Sigmoid colon (tissue), 7 donors: ENCODE measurements at regions of chr12 and their contacts with region 1.

Region 1: GRCh38 chr12:46516933-46517578 is 144.5 kb upstream of the SLC38A2 start:
- DNase-seq: no peak
- H3K4me3 ChIP-seq: no peak overlapping the region
- H3K27ac ChIP-seq: no peak overlapping the region
- H3K4me1 ChIP-seq: peaks cover 0 to 22% (median 21%) of the 10 kb centered on the region in 4 donors
- H3K27me3 ChIP-seq: no peaks in the 10 kb centered on the region
- CTCF ChIP-seq: no peak
- EP300 ChIP-seq: no peak
- POLR2A ChIP-seq: no peak

Region 2: GRCh38 chr12:46473634-46474329 is 43.3 kb before region 1 on chr12:
- intact Hi-C with region 1: loop called (anchors 5 kb)
- DNase-seq: peak; percentile 81
- H3K4me3 ChIP-seq: no peak overlapping the region
- H3K27ac ChIP-seq: peak overlapping the region; percentile 68 to 88 (median 73)
- H3K4me1 ChIP-seq: peaks cover 0 to 43% (median 31%) of the 10 kb centered on the region in 4 donors
- H3K27me3 ChIP-seq: no peaks in the 10 kb centered on the region
- CTCF ChIP-seq: no peak
- EP300 ChIP-seq: peak in 3 of 4 donors; percentile 22 to 44 (median 28)
- POLR2A ChIP-seq: no peak

Region 3: GRCh38 chr12:46556105-46556559 is 39.1 kb after region 1 on chr12:
- intact Hi-C with region 1: no loop called
- DNase-seq: no peak
- H3K4me3 ChIP-seq: no peak overlapping the region
- H3K27ac ChIP-seq: peak overlapping the region; percentile 35 to 82 (median 72)
- H3K4me1 ChIP-seq: peaks cover 0 to 71% (median 44%) of the 10 kb centered on the region in 4 donors
- H3K27me3 ChIP-seq: no peaks in the 10 kb centered on the region
- CTCF ChIP-seq: no peak
- EP300 ChIP-seq: peak in 1 of 4 donors; percentile 72
- POLR2A ChIP-seq: no peak